Activated CD8-positive, alpha-beta memory T cell treated with anti-CD3 and anti-CD28 coated beads, Interleukin-2, amount 10 ng/mL, durations not matched to agents 7 days and 5 days (primary cell): ENCODE measurements at regions of chr11 and their contacts with region 1.

Region 1: DNA sequence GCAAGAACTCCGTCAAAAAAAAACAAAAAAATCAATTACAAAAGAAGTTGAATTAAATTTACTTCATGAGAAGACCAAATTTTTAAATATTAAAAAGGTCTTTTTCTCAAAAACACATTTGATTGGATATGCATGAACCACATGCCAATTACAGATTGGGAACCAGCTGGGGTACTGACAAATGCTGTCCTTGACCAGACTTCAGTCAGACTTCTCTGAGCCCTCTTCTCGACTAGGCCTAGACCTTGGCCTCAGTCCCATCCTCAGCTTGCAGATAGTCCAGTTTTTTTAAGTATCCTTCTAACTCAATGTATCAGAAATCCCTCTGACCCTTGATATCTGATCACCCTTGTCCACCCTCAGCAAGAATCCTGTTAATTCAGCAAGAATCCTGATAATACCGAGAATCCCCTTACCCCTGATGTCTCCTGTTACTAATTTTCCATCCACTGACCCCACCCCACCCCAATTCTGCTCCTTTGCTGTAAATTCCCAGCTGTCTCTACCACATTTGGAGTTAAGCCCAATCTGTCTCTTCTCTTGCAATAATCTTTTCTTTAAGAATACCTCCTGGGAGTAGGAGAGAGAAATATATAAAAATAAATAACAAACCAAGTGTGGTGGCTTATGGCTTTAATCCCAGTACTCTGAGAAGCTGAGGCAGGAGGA is 30.9 kb downstream of the OR4D9 start:
- DNase-seq: peak; percentile 16
- ATAC-seq: no peak
- H3K4me3 Mint-ChIP-seq: no peak overlapping the region
- H3K27ac Mint-ChIP-seq: no peak overlapping the region
- H3K4me1 Mint-ChIP-seq: peaks cover 9% of the 10 kb centered on the region
- H3K27me3 Mint-ChIP-seq: peaks cover 5% of the 10 kb centered on the region

Region 2: GRCh38 chr11:59510940-59511589 is 31.2 kb before region 1 on chr11 and contains the start of gene OR4D9:
- CTCF ChIA-PET with region 1: interaction called, 20 read pairs
- DNase-seq: no peak
- ATAC-seq: peak; percentile 75
- H3K4me3 Mint-ChIP-seq: no peak within 1 kb of the TSS
- H3K27ac Mint-ChIP-seq: peak within 1 kb of the TSS; percentile 83
- H3K4me1 Mint-ChIP-seq: peaks cover 26% of the 10 kb centered on the region
- H3K27me3 Mint-ChIP-seq: peaks cover 14% of the 10 kb centered on the region
- total RNA-seq, gene OR4D9: not detected

Region 3: GRCh38 chr11:59601788-59602187 is 59.5 kb after region 1 on chr11:
- CTCF ChIA-PET with region 1: no interaction called
- DNase-seq: no peak
- ATAC-seq: no peak
- H3K4me3 Mint-ChIP-seq: no peak overlapping the region
- H3K27ac Mint-ChIP-seq: no peak overlapping the region
- H3K4me1 Mint-ChIP-seq: no peaks in the 10 kb centered on the region
- H3K27me3 Mint-ChIP-seq: no peaks in the 10 kb centered on the region

Region 4: GRCh38 chr11:59615637-59616395 is 73.5 kb after region 1 on chr11 and contains the start of gene OSBP:
- CTCF ChIA-PET with region 1: interaction called, 12 read pairs
- DNase-seq: peak; percentile 99
- ATAC-seq: peak; percentile 89
- H3K4me3 Mint-ChIP-seq: peak within 1 kb of the TSS; percentile 99
- H3K27ac Mint-ChIP-seq: peak within 1 kb of the TSS; percentile 95
- H3K4me1 Mint-ChIP-seq: peaks cover 52% of the 10 kb centered on the region
- H3K27me3 Mint-ChIP-seq: no peaks in the 10 kb centered on the region
- total RNA-seq, gene OSBP: 36.6 to 38.0 TPM

Region 5: GRCh38 chr11:59658036-59658435 is 115.8 kb after region 1 on chr11:
- CTCF ChIA-PET with region 1: no interaction called
- DNase-seq: no peak
- ATAC-seq: no peak
- H3K4me3 Mint-ChIP-seq: no peak overlapping the region
- H3K27ac Mint-ChIP-seq: no peak overlapping the region
- H3K4me1 Mint-ChIP-seq: peaks cover 17% of the 10 kb centered on the region
- H3K27me3 Mint-ChIP-seq: no peaks in the 10 kb centered on the region

Region 6: GRCh38 chr11:59668950-59669610 is 126.8 kb after region 1 on chr11 and contains the start of gene PATL1:
- CTCF ChIA-PET with region 1: interaction called, 10 read pairs
- DNase-seq: peak; percentile 99
- ATAC-seq: peak; percentile 93
- H3K4me3 Mint-ChIP-seq: peak within 1 kb of the TSS; percentile 95
- H3K27ac Mint-ChIP-seq: peak within 1 kb of the TSS; percentile 98
- H3K4me1 Mint-ChIP-seq: peaks cover 36% of the 10 kb centered on the region
- H3K27me3 Mint-ChIP-seq: no peaks in the 10 kb centered on the region
- total RNA-seq, gene PATL1: 56.7 to 62.6 TPM

Region 7: GRCh38 chr11:59680287-59681154 is 138.2 kb after region 1 on chr11:
- CTCF ChIA-PET with region 1: interaction called, 12 read pairs
- DNase-seq: peak; percentile 69
- ATAC-seq: peak; percentile 91
- H3K4me3 Mint-ChIP-seq: no peak overlapping the region
- H3K27ac Mint-ChIP-seq: no peak overlapping the region
- H3K4me1 Mint-ChIP-seq: no peaks in the 10 kb centered on the region
- H3K27me3 Mint-ChIP-seq: peaks cover 21% of the 10 kb centered on the region